ENCODE measurements at regions of chr1 and their contacts with region 1.

Region 1: GRCh38 chr1:163174524-163175437 is 27.9 kb downstream of the RGS5 start:
- DNase-seq: peak; percentile 61 to 75 (median 64)
- ATAC-seq: peak in 3 of 4 donors; percentile 72 to 84 (median 75)
- H3K4me3 ChIP-seq: peak overlapping the region in 6 of 12 donors; percentile 4 to 42 (median 27)
- H3K27ac ChIP-seq: peak overlapping the region in 8 of 12 donors; percentile 9 to 74 (median 58)
- H3K4me1 ChIP-seq: peaks cover 0 to 35% (median 6%) of the 10 kb centered on the region in 12 donors
- H3K27me3 ChIP-seq: no peaks in the 10 kb centered on the region
- CTCF ChIP-seq: peak; percentile 72 to 93 (median 86)
- POLR2A ChIP-seq: no peak

Region 2: DNA sequence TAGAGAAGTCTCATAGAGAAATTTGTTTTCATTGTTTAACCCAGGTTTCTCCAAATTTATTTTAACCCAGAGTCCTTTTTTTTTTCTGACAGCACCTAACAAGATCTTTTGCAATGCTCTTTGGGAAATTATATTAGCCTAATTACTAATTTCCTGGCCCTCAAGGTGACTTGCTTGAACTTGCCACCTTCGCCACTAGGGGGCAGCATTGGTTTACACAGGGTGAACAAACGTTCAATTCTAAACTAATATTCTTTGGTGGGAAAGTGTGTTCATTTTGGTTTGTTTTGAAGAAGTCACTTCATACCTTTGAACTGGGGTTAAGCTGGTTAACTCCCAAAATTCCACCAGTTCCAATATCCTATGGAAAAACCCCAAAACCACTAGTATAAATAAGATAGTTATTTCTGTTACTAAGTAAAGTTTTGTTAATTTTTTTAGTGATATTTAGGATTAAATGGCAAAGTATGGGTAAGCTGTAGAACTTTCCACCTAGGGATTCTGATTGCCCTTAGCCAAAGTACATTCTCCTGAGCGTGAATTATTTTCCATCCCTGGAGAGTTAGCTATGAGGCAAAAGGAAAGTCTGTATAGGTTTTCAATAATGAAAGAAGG is 326.8 kb before region 1 on chr1:
- intact Hi-C with region 1: loop called in 2 of 10 experiments (anchors 2 to 5 kb)
- DNase-seq: peak; percentile 69 to 80 (median 70)
- ATAC-seq: peak in 1 of 4 donors; percentile 45
- H3K4me3 ChIP-seq: no peak overlapping the region
- H3K27ac ChIP-seq: no peak overlapping the region
- H3K4me1 ChIP-seq: no peaks in the 10 kb centered on the region
- H3K27me3 ChIP-seq: no peaks in the 10 kb centered on the region
- CTCF ChIP-seq: peak; percentile 88 to 96 (median 94)
- POLR2A ChIP-seq: no peak

Region 3: DNA sequence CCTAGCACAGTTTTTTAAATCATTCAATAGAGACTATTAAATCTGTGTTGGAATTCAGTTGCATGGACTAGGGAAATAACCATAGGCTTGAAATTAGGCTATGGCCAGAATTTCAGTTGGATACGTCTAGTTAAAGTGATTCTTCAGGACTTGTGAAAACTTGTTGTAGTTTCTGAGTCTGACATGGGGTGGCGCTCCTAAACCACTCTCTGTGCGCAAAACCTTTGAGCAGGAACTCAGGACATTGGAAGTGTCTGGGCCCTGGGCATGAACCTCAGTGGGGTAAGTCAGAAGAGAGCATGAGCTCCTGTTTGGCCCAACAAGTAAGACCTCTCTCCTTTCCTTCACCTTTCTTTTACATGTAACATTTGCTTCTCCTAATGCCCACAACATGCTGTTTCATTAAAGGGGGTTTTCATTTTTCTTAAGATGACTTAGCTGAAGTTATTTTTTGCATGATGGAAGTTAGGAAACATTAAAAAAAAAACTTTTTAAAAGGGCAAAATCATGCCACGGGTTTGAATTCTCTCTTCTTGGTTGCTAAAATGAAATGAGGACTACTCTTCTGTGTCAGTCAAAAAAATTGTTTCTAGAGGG is 296.7 kb before region 1 on chr1:
- intact Hi-C with region 1: loop called (anchors 1 to 5 kb)
- DNase-seq: peak in 4 of 5 donors; percentile 33 to 57 (median 46)
- ATAC-seq: peak in 3 of 4 donors; percentile 69 to 78 (median 70)
- H3K4me3 ChIP-seq: no peak overlapping the region
- H3K27ac ChIP-seq: no peak overlapping the region
- H3K4me1 ChIP-seq: no peaks in the 10 kb centered on the region
- H3K27me3 ChIP-seq: peaks cover 0 to 6% (median 0%) of the 10 kb centered on the region in 9 donors
- CTCF ChIP-seq: peak; percentile 54 to 78 (median 70)
- POLR2A ChIP-seq: no peak

Region 4: GRCh38 chr1:163071405-163072255 is 103.2 kb before region 1 on chr1:
- intact Hi-C with region 1: loop called (anchors 2 to 10 kb)
- DNase-seq: peak in 4 of 5 donors; percentile 41 to 64 (median 62)
- ATAC-seq: peak in 3 of 4 donors; percentile 32 to 76 (median 61)
- H3K4me3 ChIP-seq: peak overlapping the region in 7 of 12 donors; percentile 23 to 65 (median 53)
- H3K27ac ChIP-seq: peak overlapping the region in 4 of 12 donors; percentile 18 to 62 (median 46)
- H3K4me1 ChIP-seq: peaks cover 0 to 5% (median 0%) of the 10 kb centered on the region in 12 donors
- H3K27me3 ChIP-seq: peaks cover 0 to 18% (median 0%) of the 10 kb centered on the region in 9 donors
- CTCF ChIP-seq: peak; percentile 34 to 74 (median 59)
- POLR2A ChIP-seq: no peak

Region 5: DNA sequence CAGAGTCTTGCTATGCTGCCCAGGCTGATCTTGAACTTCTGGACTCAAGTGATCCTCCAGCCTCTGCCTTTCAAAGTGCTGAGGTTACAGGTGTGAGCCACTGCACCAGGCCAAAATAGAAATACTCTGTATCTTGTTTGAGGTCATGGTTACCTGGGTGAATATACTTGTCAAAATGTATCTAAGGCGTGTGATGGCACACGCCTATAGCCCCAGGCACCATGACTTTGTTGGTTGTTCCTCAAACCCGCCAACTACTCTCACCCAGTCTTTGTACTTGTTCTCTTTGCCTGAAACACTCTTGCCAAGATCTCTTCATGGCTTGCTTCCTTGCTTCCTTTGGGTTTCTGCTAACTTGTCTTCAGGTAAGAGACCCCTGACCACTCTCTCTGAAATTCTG is 65.9 kb after region 1 on chr1:
- intact Hi-C with region 1: no loop called
- DNase-seq: no peak
- ATAC-seq: no peak
- H3K4me3 ChIP-seq: no peak overlapping the region
- H3K27ac ChIP-seq: no peak overlapping the region
- H3K4me1 ChIP-seq: no peaks in the 10 kb centered on the region
- H3K27me3 ChIP-seq: no peaks in the 10 kb centered on the region
- CTCF ChIP-seq: no peak
- POLR2A ChIP-seq: no peak

Region 6: GRCh38 chr1:163300568-163300967 is 125.8 kb after region 1 on chr1:
- intact Hi-C with region 1: no loop called
- DNase-seq: no peak
- ATAC-seq: peak in 2 of 4 donors; percentile 45 to 54
- H3K4me3 ChIP-seq: no peak overlapping the region
- H3K27ac ChIP-seq: peak overlapping the region in 1 of 12 donors; percentile 0
- H3K4me1 ChIP-seq: peaks cover 0 to 8% (median 0%) of the 10 kb centered on the region in 12 donors
- H3K27me3 ChIP-seq: no peaks in the 10 kb centered on the region
- CTCF ChIP-seq: no peak
- POLR2A ChIP-seq: no peak

Region 7: DNA sequence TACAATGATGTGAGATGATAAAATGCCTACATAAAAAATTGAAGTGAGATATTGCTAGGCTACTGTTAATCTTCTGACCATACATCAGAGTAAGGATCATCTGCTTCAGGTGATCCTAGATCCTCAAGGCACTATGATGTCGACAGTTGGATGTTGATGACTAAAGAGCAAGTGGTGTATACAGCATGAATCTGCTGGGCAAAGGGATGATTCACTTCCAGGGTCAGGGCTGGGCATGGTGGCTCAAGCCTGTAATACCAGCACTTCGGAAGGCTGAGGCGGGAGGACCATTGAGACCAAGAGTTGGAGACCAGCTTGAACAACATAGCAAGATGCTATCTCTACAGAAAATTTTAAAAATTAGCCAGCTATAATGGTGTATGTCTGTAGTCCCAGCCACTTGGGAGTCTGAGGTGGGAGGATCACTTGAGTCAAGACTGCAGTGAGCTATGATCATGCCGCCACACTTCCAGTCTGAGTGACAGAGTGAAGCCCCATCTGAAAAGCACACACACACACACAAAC is 171.6 kb after region 1 on chr1:
- intact Hi-C with region 1: no loop called
- DNase-seq: no peak
- ATAC-seq: no peak
- H3K4me3 ChIP-seq: no peak overlapping the region
- H3K27ac ChIP-seq: no peak overlapping the region
- H3K4me1 ChIP-seq: no peaks in the 10 kb centered on the region
- H3K27me3 ChIP-seq: no peaks in the 10 kb centered on the region
- CTCF ChIP-seq: no peak
- POLR2A ChIP-seq: no peak

Region 8: DNA sequence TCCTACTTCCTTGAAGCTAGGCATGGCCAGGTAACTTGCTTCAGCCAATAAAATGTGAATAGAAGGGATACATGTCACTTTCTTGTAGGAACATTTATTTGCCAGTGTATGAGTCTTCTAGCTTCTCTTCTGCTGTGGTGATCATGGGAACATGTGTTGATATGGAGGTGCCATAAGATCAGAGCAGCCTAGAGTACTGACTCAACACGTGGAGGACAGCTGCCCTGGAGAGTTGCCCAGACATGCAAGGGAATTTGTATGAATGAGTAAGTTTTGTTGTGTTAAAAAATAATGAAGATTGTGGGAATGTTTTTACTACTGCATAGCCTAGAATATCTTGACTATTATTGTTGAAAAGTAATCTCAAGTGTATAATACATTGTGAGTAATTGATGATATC is 649.2 kb after region 1 on chr1:
- intact Hi-C with region 1: no loop called
- DNase-seq: peak; percentile 41 to 72 (median 59)
- ATAC-seq: peak in 3 of 4 donors; percentile 39 to 87 (median 53)
- H3K4me3 ChIP-seq: no peak overlapping the region
- H3K27ac ChIP-seq: peak overlapping the region in 4 of 12 donors; percentile 10 to 49 (median 24)
- H3K4me1 ChIP-seq: peaks cover 0 to 17% (median 2%) of the 10 kb centered on the region in 12 donors
- H3K27me3 ChIP-seq: no peaks in the 10 kb centered on the region
- CTCF ChIP-seq: no peak
- POLR2A ChIP-seq: no peak

Measured in heart left ventricle (tissue), 16 donors.